OCI-LY7 (cell line): ENCODE measurements at regions of chr1 and their contacts with region 1.

Region 1: DNA sequence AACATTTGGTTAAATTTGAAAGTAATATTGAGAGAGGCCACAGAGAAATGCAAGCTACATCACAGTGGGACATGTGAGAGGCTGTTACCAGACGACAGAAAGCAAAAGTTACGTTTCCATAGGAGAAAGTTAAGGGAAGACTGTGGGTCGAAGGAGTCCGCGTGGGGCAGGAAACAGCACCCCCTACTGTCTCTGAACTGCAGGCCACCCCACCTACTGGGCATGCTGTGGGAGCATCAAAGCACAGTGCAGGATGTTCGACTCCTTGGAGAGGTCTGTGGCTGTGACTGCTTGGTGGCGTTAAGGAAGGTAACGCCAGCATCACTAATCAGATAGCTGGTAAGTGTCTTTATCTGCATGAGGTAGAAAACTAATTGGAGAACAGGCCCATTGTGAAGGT is 123.9 kb downstream of the PTBP2 start:
- DNase-seq: peak; percentile 54
- H3K4me3 ChIP-seq: no peak overlapping the region
- H3K27ac ChIP-seq: no peak overlapping the region
- H3K4me1 ChIP-seq: no peaks in the 10 kb centered on the region
- CTCF ChIP-seq: peak; percentile 84

Region 2: DNA sequence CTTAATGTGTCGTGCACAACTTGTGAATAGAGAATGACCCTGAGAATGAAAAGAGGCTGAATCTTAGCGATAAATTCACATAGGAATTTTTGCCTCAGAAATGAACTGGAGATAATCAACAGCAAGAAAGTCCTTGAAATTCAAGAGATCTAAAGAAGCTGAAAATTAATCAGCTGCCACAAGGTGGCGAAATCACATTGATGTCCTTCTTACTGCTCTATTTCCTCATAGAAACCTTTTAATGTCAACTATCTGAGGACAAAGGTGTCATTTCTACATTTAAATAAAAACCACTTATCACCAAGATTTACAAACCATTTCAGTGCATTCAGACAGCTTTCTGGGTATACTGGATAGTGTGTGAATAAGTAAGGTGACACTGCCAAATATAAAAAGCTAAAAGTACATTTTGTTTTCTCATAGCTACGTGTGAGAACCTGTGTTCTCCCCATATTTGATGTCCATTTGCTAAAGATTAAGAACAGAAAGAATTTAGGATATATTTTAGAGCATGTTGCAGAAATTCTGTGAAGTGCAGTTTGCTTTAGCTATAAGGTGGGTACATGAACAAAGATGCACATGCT is 609.2 kb before region 1 on chr1:
- CTCF ChIA-PET with region 1: no interaction called
- POLR2A ChIA-PET with region 1: no interaction called
- intact Hi-C with region 1: loop called (anchors 2 kb)
- DNase-seq: peak; percentile 39
- H3K4me3 ChIP-seq: no peak overlapping the region
- H3K27ac ChIP-seq: no peak overlapping the region
- H3K4me1 ChIP-seq: no peaks in the 10 kb centered on the region
- CTCF ChIP-seq: peak; percentile 80

Region 3: GRCh38 chr1:96596226-96596922 is 249.1 kb before region 1 on chr1:
- CTCF ChIA-PET with region 1: no interaction called
- POLR2A ChIA-PET with region 1: no interaction called
- intact Hi-C with region 1: loop called (anchors 5 kb)
- DNase-seq: peak; percentile 33
- H3K4me3 ChIP-seq: no peak overlapping the region
- H3K27ac ChIP-seq: no peak overlapping the region
- H3K4me1 ChIP-seq: no peaks in the 10 kb centered on the region
- CTCF ChIP-seq: peak; percentile 81

Region 4: DNA sequence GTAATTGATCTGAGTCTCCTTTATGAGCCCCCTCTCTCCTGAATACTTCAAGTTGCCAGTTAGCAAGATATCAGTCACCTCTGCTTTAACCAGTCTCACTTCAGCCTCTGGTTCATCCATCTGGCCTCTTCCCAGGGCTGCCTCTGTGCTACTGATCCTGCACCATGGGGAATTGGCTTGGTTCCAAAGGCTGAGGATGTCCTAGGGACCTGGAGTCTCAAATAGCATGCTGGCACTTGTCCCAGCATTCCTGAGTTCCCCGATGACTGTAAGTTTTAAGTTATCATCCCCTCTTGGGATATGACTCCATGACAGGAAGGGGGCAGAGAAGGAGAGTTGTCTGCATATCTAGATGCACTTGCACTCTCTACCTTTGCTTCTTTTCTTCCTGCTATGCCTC is 128.1 kb after region 1 on chr1:
- CTCF ChIA-PET with region 1: no interaction called
- POLR2A ChIA-PET with region 1: no interaction called
- intact Hi-C with region 1: no loop called
- DNase-seq: no peak
- H3K4me3 ChIP-seq: no peak overlapping the region
- H3K27ac ChIP-seq: no peak overlapping the region
- H3K4me1 ChIP-seq: no peaks in the 10 kb centered on the region
- CTCF ChIP-seq: no peak